Naive thymus-derived CD4-positive, alpha-beta T cell (primary cell): ENCODE measurements at regions of chr14 and their contacts with region 1.

Region 1: DNA sequence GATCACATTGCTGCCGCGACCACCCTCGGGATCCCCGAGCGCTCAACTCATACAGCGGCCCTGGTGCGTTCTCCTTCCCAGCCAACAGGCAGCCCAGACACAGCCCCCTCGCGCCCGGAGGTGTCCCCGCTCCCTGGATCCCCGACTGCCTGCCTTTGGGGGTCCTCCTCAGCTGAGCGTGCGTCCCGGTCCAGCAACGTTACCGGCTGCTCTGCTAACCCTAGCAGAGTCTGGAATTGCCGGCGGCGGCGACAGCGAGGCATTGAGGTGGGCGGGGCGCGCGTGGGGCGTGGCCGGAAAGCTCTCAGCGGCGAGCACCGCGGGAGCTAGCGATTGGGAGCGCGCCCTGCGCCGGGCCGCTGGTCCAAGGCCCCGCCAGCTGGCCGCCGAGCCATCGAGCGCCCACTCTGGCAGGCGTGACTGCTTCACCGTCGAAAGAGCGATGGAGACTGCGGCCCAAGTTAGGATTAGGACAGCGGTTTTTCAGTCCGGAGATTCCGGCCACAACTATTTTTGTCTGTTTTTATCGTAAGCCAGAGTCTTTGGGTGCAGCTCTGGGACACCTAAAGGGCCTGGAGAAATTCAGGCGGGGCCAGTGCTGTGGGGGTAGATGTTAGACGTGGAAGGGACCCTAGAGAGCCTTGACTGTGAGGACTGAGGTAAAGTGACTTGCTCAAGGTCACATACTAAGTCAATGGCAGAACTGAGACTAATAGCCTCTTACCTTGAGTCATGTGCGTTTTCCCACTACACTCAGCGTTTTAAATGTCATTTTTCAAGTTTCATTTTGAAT is at the start of gene HEATR5A:
- DNase-seq: peak; percentile 84 to 93 (median 90)
- ATAC-seq: peak; percentile 99
- H3K4me3 ChIP-seq: peak within 1 kb of the TSS; percentile 99
- H3K4me3 Mint-ChIP-seq: peak within 1 kb of the TSS; percentile 94 to 99 (median 98)
- H3K27ac ChIP-seq: peak within 1 kb of the TSS; percentile 83
- H3K27ac Mint-ChIP-seq: peak within 1 kb of the TSS; percentile 82 to 97 (median 92)
- H3K4me1 ChIP-seq: peaks cover 6 to 8% of the 10 kb centered on the region in 2 donors
- H3K4me1 Mint-ChIP-seq: peaks cover 20 to 35% (median 25%) of the 10 kb centered on the region in 7 donors
- H3K27me3 ChIP-seq: no peaks in the 10 kb centered on the region
- H3K27me3 Mint-ChIP-seq: peaks cover 0 to 7% (median 0%) of the 10 kb centered on the region in 5 donors
- total RNA-seq, gene HEATR5A: 7.7 to 14.4 (median 13.2) TPM

Region 2: GRCh38 chr14:30621940-30622830 is 798.3 kb before region 1 on chr14 and contains the start of gene SCFD1:
- CTCF ChIA-PET with region 1: no interaction called
- POLR2A ChIA-PET with region 1: interaction called, 3 read pairs
- intact Hi-C with region 1: loop called (anchors 1 to 10 kb)
- DNase-seq: peak; percentile 86 to 94 (median 91)
- ATAC-seq: peak; percentile 99
- H3K4me3 ChIP-seq: peak within 1 kb of the TSS; percentile 97
- H3K4me3 Mint-ChIP-seq: peak within 1 kb of the TSS; percentile 95 to 100 (median 97)
- H3K27ac ChIP-seq: peak within 1 kb of the TSS; percentile 86
- H3K27ac Mint-ChIP-seq: peak within 1 kb of the TSS; percentile 86 to 98 (median 95)
- H3K4me1 ChIP-seq: peaks cover 14 to 26% of the 10 kb centered on the region in 2 donors
- H3K4me1 Mint-ChIP-seq: peaks cover 14 to 58% (median 44%) of the 10 kb centered on the region in 7 donors
- H3K27me3 ChIP-seq: no peaks in the 10 kb centered on the region
- H3K27me3 Mint-ChIP-seq: no peaks in the 10 kb centered on the region
- total RNA-seq, gene SCFD1: 63.2 to 75.4 (median 68.2) TPM

Region 3: DNA sequence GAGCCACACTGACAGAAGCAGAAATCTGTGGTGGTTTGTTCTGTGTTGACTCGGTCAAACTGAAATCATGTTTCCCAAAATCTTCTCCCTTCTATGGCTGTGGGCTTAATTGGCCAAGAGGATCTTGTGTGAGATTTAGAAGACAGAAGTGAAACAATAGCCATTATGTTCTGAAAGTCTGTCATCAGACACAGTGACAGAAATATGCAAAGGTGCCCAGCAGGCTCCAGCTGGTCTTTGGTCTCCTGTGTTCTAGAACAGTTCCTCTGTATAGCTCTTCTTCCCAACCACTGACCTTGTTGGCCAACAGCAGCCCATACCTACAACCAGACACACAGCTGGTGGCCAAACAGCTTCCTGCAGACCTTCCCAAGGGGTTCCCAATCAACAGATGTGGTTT is 571.2 kb before region 1 on chr14:
- CTCF ChIA-PET with region 1: no interaction called
- POLR2A ChIA-PET with region 1: no interaction called
- intact Hi-C with region 1: no loop called
- DNase-seq: no peak
- ATAC-seq: no peak
- H3K4me3 ChIP-seq: no peak overlapping the region
- H3K4me3 Mint-ChIP-seq: no peak overlapping the region
- H3K27ac ChIP-seq: no peak overlapping the region
- H3K27ac Mint-ChIP-seq: no peak overlapping the region
- H3K4me1 ChIP-seq: no peaks in the 10 kb centered on the region
- H3K4me1 Mint-ChIP-seq: no peaks in the 10 kb centered on the region
- H3K27me3 ChIP-seq: no peaks in the 10 kb centered on the region
- H3K27me3 Mint-ChIP-seq: peaks cover 34 to 50% (median 47%) of the 10 kb centered on the region in 5 donors

Region 4: DNA sequence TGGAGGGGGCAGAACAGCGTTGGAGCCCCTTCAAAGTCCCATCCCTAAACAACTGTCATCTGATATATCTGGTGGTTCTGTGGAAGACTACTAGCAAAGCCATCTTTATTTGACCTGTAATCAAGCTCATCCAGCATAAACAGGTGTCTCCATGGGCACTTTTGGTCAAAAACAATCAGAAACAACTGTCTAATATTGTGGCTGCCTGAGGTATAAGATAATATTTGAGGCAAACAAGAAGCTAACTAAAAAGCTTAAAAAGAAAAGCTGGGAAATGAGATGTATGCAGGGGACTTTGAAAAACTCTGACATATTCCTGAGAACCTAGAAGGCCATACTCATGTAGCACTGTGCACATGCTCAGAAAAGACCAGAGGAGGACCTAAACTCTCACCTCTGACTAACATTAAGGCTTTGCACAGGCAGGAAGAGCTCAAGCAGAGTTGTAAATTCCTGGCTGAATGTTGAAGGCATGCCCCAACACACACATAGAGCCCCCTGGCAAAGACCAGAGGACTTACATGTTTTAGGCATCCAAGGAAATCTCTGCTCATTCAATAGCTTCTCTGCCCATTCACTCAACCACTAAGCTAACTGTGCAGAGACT is 422.3 kb before region 1 on chr14:
- CTCF ChIA-PET with region 1: no interaction called
- POLR2A ChIA-PET with region 1: no interaction called
- intact Hi-C with region 1: no loop called
- DNase-seq: no peak
- ATAC-seq: no peak
- H3K4me3 ChIP-seq: no peak overlapping the region
- H3K4me3 Mint-ChIP-seq: no peak overlapping the region
- H3K27ac ChIP-seq: no peak overlapping the region
- H3K27ac Mint-ChIP-seq: no peak overlapping the region
- H3K4me1 ChIP-seq: peaks cover 0 to 5% of the 10 kb centered on the region in 2 donors
- H3K4me1 Mint-ChIP-seq: peaks cover 17 to 69% (median 51%) of the 10 kb centered on the region in 7 donors
- H3K27me3 ChIP-seq: no peaks in the 10 kb centered on the region
- H3K27me3 Mint-ChIP-seq: no peaks in the 10 kb centered on the region

Region 5: DNA sequence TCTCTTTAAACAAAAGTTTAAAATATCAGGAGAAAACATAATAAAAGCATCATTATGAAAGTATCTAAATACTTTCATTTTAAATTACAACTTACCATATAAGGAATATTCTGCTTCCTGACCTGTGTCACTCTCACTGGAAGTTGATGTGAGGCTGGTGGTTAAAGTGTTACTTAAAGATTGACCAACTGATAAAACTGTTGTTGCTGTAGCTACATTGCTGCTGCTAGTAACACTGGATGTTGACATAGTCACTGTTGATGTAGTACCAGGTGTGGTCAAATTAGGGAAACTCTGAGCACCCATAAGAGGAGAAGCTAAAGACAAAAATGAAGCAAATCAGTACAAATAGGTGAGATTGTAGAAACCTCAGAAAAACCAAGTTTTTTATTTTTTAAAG is 292.8 kb before region 1 on chr14:
- CTCF ChIA-PET with region 1: no interaction called
- POLR2A ChIA-PET with region 1: no interaction called
- intact Hi-C with region 1: loop called in 1 of 2 experiments (anchors 1 kb)
- DNase-seq: peak in 5 of 9 donors; percentile 2 to 42 (median 27)
- ATAC-seq: peak; percentile 91
- H3K4me3 ChIP-seq: no peak overlapping the region
- H3K4me3 Mint-ChIP-seq: peak overlapping the region in 3 of 10 donors; percentile 7 to 67 (median 18)
- H3K27ac ChIP-seq: no peak overlapping the region
- H3K27ac Mint-ChIP-seq: peak overlapping the region in 5 of 9 donors; percentile 11 to 75 (median 52)
- H3K4me1 ChIP-seq: peaks cover 9 to 30% of the 10 kb centered on the region in 2 donors
- H3K4me1 Mint-ChIP-seq: peaks cover 16 to 47% (median 39%) of the 10 kb centered on the region in 7 donors
- H3K27me3 ChIP-seq: no peaks in the 10 kb centered on the region
- H3K27me3 Mint-ChIP-seq: peaks cover 0 to 2% (median 0%) of the 10 kb centered on the region in 5 donors

Region 6: DNA sequence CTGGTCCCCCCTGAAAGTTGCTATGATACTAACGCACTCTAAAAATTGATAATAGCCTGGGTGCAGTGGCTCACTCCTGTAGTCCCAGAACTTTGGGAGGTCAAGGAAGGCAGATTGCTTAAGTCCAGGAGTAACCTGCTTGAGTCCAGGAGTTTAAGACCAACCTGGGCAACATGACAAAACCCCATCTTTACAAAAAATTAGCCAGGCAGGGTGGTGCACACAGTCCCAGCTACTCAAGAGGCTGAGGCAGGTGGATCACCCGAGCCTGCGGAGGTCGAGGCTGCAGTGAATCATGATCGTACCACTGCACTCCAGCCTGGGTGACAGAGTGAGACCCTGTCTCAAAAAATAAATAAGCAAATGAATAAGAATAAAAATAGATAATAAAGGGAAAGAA is 43.1 kb before region 1 on chr14:
- CTCF ChIA-PET with region 1: no interaction called
- POLR2A ChIA-PET with region 1: no interaction called
- intact Hi-C with region 1: loop called in 1 of 2 experiments (anchors 5 kb)
- DNase-seq: no peak
- ATAC-seq: no peak
- H3K4me3 ChIP-seq: no peak overlapping the region
- H3K4me3 Mint-ChIP-seq: no peak overlapping the region
- H3K27ac ChIP-seq: no peak overlapping the region
- H3K27ac Mint-ChIP-seq: peak overlapping the region in 2 of 9 donors; percentile 18 to 42
- H3K4me1 ChIP-seq: no peaks in the 10 kb centered on the region
- H3K4me1 Mint-ChIP-seq: peaks cover 0 to 17% (median 0%) of the 10 kb centered on the region in 7 donors
- H3K27me3 ChIP-seq: no peaks in the 10 kb centered on the region
- H3K27me3 Mint-ChIP-seq: no peaks in the 10 kb centered on the region

Region 7: GRCh38 chr14:31456841-31457664 is 36.5 kb after region 1 on chr14 and contains the start of gene DTD2:
- CTCF ChIA-PET with region 1: interaction called, 5 read pairs
- POLR2A ChIA-PET with region 1: interaction called, 18 read pairs
- intact Hi-C with region 1: loop called (anchors 1 kb)
- DNase-seq: peak; percentile 80 to 89 (median 86)
- ATAC-seq: peak; percentile 99
- H3K4me3 ChIP-seq: peak within 1 kb of the TSS; percentile 82
- H3K4me3 Mint-ChIP-seq: peak within 1 kb of the TSS; percentile 92 to 98 (median 96)
- H3K27ac ChIP-seq: peak within 1 kb of the TSS; percentile 77
- H3K27ac Mint-ChIP-seq: peak within 1 kb of the TSS; percentile 89 to 98 (median 95)
- H3K4me1 ChIP-seq: peaks cover 6% of the 10 kb centered on the region in 2 donors
- H3K4me1 Mint-ChIP-seq: peaks cover 14 to 48% (median 40%) of the 10 kb centered on the region in 7 donors
- H3K27me3 ChIP-seq: no peaks in the 10 kb centered on the region
- H3K27me3 Mint-ChIP-seq: peaks cover 0 to 5% (median 0%) of the 10 kb centered on the region in 5 donors
- total RNA-seq, gene DTD2: 13.4 to 20.2 (median 18.6) TPM

Region 8: DNA sequence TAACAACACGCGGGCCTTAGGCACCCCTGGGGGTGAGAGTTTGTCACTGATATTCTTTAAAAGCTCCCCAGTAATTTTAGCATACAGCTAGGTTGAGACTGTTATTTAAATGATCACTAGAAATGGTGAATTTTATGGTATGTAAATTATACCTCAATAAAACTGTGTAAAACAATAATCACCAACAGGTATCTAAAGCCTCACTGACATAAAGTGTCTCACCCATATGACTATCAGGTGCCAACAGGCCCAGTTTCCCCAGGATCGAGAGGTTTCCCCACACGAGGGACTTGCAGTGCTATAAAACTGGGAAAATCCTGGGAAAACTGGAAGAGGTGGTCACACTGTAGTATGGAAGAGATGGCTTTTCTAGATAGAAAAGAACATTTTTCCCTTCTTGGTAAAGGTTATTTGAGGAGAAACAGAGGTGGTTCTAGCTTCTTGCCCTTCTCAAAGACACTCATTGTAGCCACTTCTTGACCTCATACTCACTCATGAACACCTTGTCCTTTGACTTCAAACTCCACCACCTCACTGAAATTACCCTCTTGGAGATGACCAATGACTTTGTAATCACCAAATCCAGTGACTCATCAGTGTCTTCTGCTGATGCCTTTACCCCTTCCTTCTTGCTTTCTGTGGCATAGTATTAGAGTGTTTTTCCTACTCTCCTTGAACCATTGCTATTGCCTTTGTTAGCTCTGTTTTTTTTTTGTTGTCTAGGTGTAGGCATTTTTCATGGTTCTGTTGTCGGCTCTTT is 115.9 kb after region 1 on chr14:
- CTCF ChIA-PET with region 1: no interaction called
- POLR2A ChIA-PET with region 1: no interaction called
- intact Hi-C with region 1: no loop called
- DNase-seq: no peak
- ATAC-seq: no peak
- H3K4me3 ChIP-seq: no peak overlapping the region
- H3K4me3 Mint-ChIP-seq: no peak overlapping the region
- H3K27ac ChIP-seq: no peak overlapping the region
- H3K27ac Mint-ChIP-seq: peak overlapping the region in 1 of 9 donors; percentile 12
- H3K4me1 ChIP-seq: no peaks in the 10 kb centered on the region
- H3K4me1 Mint-ChIP-seq: no peaks in the 10 kb centered on the region
- H3K27me3 ChIP-seq: no peaks in the 10 kb centered on the region
- H3K27me3 Mint-ChIP-seq: peaks cover 2 to 34% (median 23%) of the 10 kb centered on the region in 5 donors

Region 9: DNA sequence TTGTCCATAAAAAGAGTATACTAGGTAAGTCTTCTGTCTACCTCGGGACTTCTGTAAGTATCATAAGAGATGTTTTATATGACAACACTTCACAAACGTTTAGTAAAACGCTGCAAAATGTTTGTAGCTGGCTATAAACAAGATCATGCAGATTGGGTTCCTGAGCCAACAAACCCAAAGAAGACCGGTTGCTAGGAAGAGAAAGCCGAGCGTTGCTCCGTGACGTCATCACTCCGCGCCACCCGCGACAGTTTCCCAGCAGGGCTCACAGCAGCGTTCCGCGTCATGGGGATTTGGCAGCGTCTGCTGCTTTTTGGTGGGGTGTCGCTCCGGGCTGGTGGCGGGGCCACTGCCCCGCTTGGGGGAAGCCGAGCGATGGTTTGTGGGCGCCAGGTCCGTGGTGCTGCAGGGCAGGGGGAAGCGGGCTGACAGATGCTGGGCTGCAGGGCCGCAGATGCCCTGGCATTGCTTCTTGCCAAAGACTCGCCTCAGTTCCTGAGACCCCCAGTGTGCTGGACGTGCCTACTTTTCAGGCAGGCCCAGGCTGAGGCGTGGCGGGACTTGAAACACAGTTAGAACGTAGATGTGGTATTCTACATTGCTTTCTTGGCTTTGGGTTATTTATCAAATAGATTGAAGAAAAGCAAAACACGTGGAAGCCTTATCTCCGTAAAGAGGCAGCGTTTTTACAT is 140.8 kb after region 1 on chr14 and contains the start of gene NUBPL:
- CTCF ChIA-PET with region 1: no interaction called
- POLR2A ChIA-PET with region 1: no interaction called
- intact Hi-C with region 1: loop called (anchors 1 kb)
- DNase-seq: peak; percentile 96 to 98 (median 97)
- ATAC-seq: peak; percentile 95
- H3K4me3 ChIP-seq: peak within 1 kb of the TSS; percentile 90
- H3K4me3 Mint-ChIP-seq: peak within 1 kb of the TSS; percentile 88 to 98 (median 96)
- H3K27ac ChIP-seq: peak within 1 kb of the TSS; percentile 81
- H3K27ac Mint-ChIP-seq: peak within 1 kb of the TSS; percentile 95 to 100 (median 99)
- H3K4me1 ChIP-seq: peaks cover 0 to 5% of the 10 kb centered on the region in 2 donors
- H3K4me1 Mint-ChIP-seq: peaks cover 24 to 44% (median 38%) of the 10 kb centered on the region in 7 donors
- H3K27me3 ChIP-seq: no peaks in the 10 kb centered on the region
- H3K27me3 Mint-ChIP-seq: peaks cover 0 to 11% (median 5%) of the 10 kb centered on the region in 5 donors
- total RNA-seq, gene NUBPL: 6.1 to 11.7 (median 8.3) TPM

Region 10: GRCh38 chr14:32350020-32350419 is 929.5 kb after region 1 on chr14:
- CTCF ChIA-PET with region 1: no interaction called
- POLR2A ChIA-PET with region 1: no interaction called
- intact Hi-C with region 1: no loop called
- DNase-seq: no peak
- ATAC-seq: no peak
- H3K4me3 ChIP-seq: no peak overlapping the region
- H3K4me3 Mint-ChIP-seq: no peak overlapping the region
- H3K27ac ChIP-seq: no peak overlapping the region
- H3K27ac Mint-ChIP-seq: no peak overlapping the region
- H3K4me1 ChIP-seq: no peaks in the 10 kb centered on the region
- H3K4me1 Mint-ChIP-seq: no peaks in the 10 kb centered on the region
- H3K27me3 ChIP-seq: no peaks in the 10 kb centered on the region
- H3K27me3 Mint-ChIP-seq: no peaks in the 10 kb centered on the region